A673 (cell line): ENCODE measurements at regions of chr2 and their contacts with region 1.

Region 1: GRCh38 chr2:241567776-241568175 is 9.2 kb downstream of the BOK start:
- DNase-seq: no peak
- H3K4me3 ChIP-seq: no peak overlapping the region
- H3K27ac ChIP-seq: no peak overlapping the region
- H3K4me1 ChIP-seq: no peaks in the 10 kb centered on the region
- H3K27me3 ChIP-seq: no peaks in the 10 kb centered on the region
- CTCF ChIP-seq: no peak

Region 2: DNA sequence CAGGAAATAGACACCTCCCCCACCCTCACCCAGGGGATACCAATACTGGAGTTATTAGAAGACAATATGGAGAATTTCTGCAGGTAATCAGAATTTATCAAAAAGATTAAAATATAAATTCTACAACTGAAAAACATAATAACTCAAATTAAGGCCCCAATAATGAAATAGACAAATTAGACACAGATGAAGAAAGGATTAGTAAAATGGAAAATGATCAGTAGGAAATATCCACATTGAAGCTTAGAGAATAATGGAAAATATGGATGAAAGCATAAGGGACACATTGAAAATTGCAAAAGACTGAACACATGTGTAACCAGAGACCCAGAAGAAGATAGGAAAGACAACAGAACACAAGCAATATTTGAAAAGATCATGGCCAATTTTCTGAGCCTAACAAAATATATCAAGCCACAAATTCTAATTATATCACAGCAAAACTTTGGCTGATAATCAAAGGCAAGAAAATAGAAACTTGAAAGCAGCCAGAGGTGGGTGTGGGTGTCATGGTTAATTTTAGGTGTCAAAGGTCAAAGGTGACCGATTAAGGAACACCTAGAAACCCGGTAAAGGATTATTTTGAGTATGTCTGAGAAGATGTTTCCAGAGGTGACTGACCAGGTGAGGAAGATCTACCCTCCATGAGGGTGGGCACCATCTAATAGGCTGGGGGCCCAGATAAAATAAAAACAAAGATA is 18.9 kb after region 1 on chr2:
- CTCF ChIA-PET with region 1: no interaction called
- POLR2A ChIA-PET with region 1: interaction called, 11 read pairs
- intact Hi-C with region 1: no loop called
- DNase-seq: no peak
- H3K4me3 ChIP-seq: no peak overlapping the region
- H3K27ac ChIP-seq: no peak overlapping the region
- H3K4me1 ChIP-seq: no peaks in the 10 kb centered on the region
- H3K27me3 ChIP-seq: no peaks in the 10 kb centered on the region
- CTCF ChIP-seq: no peak